IMR-90 (cell line): ENCODE measurements at regions of chr11 and their contacts with region 1.

Region 1: GRCh38 chr11:10454878-10455631 is at the start of gene AMPD3:
- DNase-seq: peak; percentile 99
- ATAC-seq: peak; percentile 91
- H3K4me3 ChIP-seq: peak within 1 kb of the TSS; percentile 49
- H3K27ac ChIP-seq: peak within 1 kb of the TSS; percentile 89
- H3K4me1 ChIP-seq: peaks cover 24% of the 10 kb centered on the region
- H3K27me3 ChIP-seq: no peaks in the 10 kb centered on the region; the same call in 1 of the 2 replicates
- CTCF ChIP-seq: no peak
- POLR2A ChIP-seq: peak; percentile 90
- RAD21 ChIP-seq: no peak; the same call in 1 of the 2 replicates
- total RNA-seq, gene AMPD3: 8.1 and 8.6 TPM in 2 replicates

Region 2: GRCh38 chr11:10436224-10436623 is 18.8 kb before region 1 on chr11:
- CTCF ChIA-PET with region 1: interaction called, 5 read pairs
- POLR2A ChIA-PET with region 1: interaction called, 10 read pairs
- dilution Hi-C with region 1: no loop called
- in situ Hi-C with region 1: no loop called
- intact Hi-C with region 1: no loop called
- DNase-seq: no peak
- ATAC-seq: no peak
- H3K4me3 ChIP-seq: no peak overlapping the region
- H3K27ac ChIP-seq: no peak overlapping the region
- H3K4me1 ChIP-seq: peaks cover 3% of the 10 kb centered on the region
- H3K27me3 ChIP-seq: no peaks in the 10 kb centered on the region
- CTCF ChIP-seq: no peak
- POLR2A ChIP-seq: no peak
- RAD21 ChIP-seq: no peak

Region 3: GRCh38 chr11:10899121-10899830 is 444.2 kb after region 1 on chr11:
- CTCF ChIA-PET with region 1: no interaction called
- POLR2A ChIA-PET with region 1: interaction called, 12 read pairs
- dilution Hi-C with region 1: no loop called
- in situ Hi-C with region 1: no loop called
- intact Hi-C with region 1: no loop called
- DNase-seq: no peak
- ATAC-seq: peak; percentile 61
- H3K4me3 ChIP-seq: no peak overlapping the region
- H3K27ac ChIP-seq: peak overlapping the region; percentile 92
- H3K4me1 ChIP-seq: peaks cover 31% of the 10 kb centered on the region
- H3K27me3 ChIP-seq: no peaks in the 10 kb centered on the region
- CTCF ChIP-seq: no peak
- POLR2A ChIP-seq: no peak
- RAD21 ChIP-seq: no peak